ENCODE measurements at regions of chr7 and their contacts with region 1.

Region 1: GRCh38 chr7:128830231-128831177 is at the start of gene FLNC:
- DNase-seq: peak; percentile 61 to 71
- H3K4me3 ChIP-seq: peak within 1 kb of the TSS; percentile 74
- H3K4me3 Mint-ChIP-seq: peak within 1 kb of the TSS; percentile 75
- H3K27ac Mint-ChIP-seq: peak within 1 kb of the TSS; percentile 42
- H3K4me1 ChIP-seq: peaks cover 43% of the 10 kb centered on the region
- H3K4me1 Mint-ChIP-seq: peaks cover 33% of the 10 kb centered on the region
- H3K27me3 ChIP-seq: no peaks in the 10 kb centered on the region
- H3K27me3 Mint-ChIP-seq: no peaks in the 10 kb centered on the region
- CTCF ChIP-seq: no peak
- total RNA-seq, gene FLNC: 108 and 128 TPM in 2 replicates

Region 2: DNA sequence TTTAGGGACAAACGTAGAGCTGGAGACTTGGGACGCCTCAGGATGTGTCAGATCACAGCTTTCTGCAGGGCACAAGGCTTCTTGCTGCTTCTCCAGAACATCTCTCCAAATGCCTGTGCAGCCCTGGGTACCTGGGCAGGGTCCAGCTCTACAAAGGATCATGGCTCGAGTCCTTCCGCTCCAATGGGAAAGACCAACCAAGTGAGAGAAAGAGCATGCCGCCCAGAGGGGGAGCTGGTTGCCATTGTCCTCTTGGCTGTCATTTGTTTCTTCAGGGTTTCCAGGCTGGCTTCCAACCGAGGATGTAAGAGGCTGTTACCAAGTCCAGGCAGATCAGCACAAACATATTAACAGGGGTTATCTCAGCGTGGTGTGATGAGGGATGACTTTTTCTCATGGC is 595.0 kb before region 1 on chr7:
- CTCF ChIA-PET with region 1: no interaction called
- POLR2A ChIA-PET with region 1: no interaction called
- intact Hi-C with region 1: no loop called
- DNase-seq: no peak
- H3K4me3 ChIP-seq: no peak overlapping the region
- H3K4me3 Mint-ChIP-seq: no peak overlapping the region
- H3K27ac Mint-ChIP-seq: no peak overlapping the region
- H3K4me1 ChIP-seq: no peaks in the 10 kb centered on the region
- H3K4me1 Mint-ChIP-seq: no peaks in the 10 kb centered on the region
- H3K27me3 ChIP-seq: no peaks in the 10 kb centered on the region; the same call in 1 of the 2 replicates
- H3K27me3 Mint-ChIP-seq: peaks cover 12% of the 10 kb centered on the region
- CTCF ChIP-seq: no peak

Region 3: DNA sequence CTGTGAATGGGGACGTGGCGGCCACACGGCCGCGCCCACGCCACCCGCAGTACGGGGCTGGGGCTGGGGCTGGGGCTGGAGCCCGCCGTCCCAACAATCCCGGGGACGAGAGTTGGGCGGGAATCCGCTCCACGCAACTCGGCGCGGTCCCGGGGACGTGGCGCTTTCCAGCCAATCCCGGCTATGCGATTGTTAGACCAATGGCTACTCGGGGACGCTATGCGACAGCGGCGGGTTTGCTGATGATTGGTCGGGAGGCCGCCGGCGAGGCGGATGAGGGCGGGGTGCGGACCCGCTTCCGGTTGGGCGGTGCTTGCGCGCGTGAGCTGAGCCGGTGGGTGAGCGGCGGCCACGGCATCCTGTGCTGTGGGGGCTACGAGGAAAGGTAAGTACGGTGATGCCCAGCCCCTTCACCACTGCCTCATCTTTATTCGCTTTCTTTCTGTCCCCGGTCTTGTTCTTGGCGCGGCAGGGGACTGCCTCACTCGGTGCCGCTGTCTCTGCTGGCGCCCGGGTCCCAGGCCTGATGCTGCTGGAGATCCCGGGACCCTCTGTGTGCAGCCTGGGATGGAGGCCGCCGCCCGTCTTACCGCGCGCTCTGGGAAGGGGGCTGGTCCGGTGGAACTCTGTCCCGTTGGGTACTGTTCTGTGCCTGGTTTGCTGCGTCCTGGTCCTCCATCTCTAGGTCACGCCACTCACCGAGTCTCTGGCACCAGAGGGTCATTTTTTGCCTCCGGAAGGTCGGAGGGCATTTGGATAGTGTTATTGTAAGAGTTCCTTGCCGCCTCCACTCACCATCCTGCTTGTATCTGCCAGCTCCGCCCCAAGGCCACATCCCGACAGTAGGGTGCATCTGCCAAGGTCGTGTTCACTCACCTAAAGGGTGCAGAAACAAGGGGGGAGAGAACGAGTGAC is 91.2 kb before region 1 on chr7 and contains the start of gene CALU:
- CTCF ChIA-PET with region 1: interaction called, 5 read pairs
- POLR2A ChIA-PET with region 1: no interaction called
- intact Hi-C with region 1: loop called (anchors 2 kb)
- DNase-seq: peak; percentile 97 to 98
- H3K4me3 ChIP-seq: peak within 1 kb of the TSS; percentile 53
- H3K4me3 Mint-ChIP-seq: peak within 1 kb of the TSS; percentile 96
- H3K27ac Mint-ChIP-seq: peak within 1 kb of the TSS; percentile 95
- H3K4me1 ChIP-seq: peaks cover 40% of the 10 kb centered on the region
- H3K4me1 Mint-ChIP-seq: peaks cover 23% of the 10 kb centered on the region
- H3K27me3 ChIP-seq: no peaks in the 10 kb centered on the region
- H3K27me3 Mint-ChIP-seq: no peaks in the 10 kb centered on the region
- CTCF ChIP-seq: no peak
- total RNA-seq, gene CALU: 171 and 184 TPM in 2 replicates

Region 4: DNA sequence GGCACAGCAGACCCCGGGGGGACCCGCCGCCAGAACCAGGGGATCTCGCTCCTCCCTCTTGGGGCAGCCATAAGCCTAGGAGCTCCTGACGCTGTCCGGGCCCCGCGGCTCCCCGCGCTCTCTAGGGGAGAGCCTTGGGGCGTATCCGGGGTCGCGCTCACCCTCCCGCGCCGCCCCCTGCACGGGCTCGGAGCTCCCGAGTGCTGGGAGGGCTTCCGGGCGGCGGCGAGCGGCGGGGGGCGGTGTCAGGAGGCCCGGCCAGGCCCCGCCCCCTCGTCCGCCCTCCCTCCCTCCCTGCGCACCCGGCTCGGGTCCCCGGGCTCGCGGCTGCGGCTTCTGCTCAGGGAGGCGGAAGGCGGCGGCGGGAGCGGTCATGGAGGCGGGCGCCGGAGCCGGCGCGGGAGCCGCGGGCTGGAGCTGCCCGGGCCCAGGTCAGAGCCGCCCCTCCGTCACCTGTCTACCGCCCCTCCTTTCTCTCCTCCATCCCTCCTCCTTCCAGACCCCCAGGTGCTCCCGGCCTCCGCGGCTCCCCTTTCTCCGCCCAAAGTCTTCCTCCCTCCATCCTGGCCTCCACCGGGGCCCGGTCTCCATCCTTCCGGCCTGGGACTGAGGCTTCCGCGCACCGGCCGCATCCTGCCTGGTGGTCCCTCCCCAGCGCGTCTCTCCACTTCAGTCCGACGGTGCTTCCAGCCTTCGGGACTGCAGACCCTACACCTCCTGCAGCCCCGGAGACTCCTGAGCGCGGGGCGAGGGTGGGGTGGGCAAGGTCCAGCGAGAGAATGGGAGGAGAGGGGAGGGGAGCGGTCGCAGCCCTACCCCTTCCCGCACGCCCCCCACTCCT is 39.2 kb before region 1 on chr7:
- CTCF ChIA-PET with region 1: interaction called, 3 read pairs
- POLR2A ChIA-PET with region 1: interaction called, 5 read pairs
- intact Hi-C with region 1: loop called (anchors 5 kb)
- DNase-seq: peak; percentile 75 to 78
- H3K4me3 ChIP-seq: peak overlapping the region; percentile 82
- H3K4me3 Mint-ChIP-seq: peak overlapping the region; percentile 85
- H3K27ac Mint-ChIP-seq: no peak overlapping the region
- H3K4me1 ChIP-seq: no peaks in the 10 kb centered on the region
- H3K4me1 Mint-ChIP-seq: no peaks in the 10 kb centered on the region
- H3K27me3 ChIP-seq: peaks cover 1% of the 10 kb centered on the region
- H3K27me3 Mint-ChIP-seq: peaks cover 7% of the 10 kb centered on the region
- CTCF ChIP-seq: no peak

Region 5: DNA sequence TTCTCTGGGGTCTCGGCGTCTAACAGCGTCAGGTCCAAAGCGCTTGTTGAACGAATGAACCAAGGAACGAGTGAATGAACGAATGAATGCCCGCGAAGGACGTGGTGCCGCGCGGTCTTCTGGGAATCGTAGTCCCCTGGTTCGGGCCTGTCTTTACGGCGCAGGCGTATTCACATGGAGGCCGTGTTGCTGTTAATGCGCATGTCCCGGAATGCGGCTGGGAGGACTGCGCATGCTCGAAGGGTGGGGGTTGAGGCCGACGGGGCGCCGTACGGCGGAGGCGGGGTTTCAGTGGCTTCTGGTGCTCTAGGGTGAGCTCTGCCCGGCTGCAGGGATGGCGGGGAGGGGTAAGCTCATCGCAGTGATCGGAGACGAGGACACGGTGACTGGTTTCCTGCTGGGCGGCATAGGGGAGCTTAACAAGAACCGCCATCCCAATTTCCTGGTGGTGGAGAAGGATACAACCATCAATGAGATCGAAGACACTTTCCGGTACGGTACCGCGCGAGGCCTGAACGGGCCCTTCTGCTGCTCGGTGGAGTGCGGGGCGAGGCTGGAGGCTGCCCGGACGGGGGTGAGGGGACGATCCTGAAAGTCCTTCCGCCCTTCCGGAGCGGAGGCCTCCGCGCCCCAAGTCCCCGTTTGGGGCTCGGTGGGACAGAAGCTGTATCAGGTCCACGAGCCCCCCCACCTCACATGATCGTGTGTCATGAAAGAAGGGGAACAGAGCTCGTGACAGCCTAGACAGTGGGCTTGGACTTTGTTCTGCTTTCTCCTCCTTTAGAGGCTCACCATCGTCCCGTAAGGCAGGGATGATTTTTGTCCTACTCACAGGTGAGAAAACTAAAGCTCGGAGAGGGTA is 32.3 kb after region 1 on chr7 and contains the start of gene ATP6V1F:
- CTCF ChIA-PET with region 1: interaction called, 4 read pairs
- POLR2A ChIA-PET with region 1: no interaction called
- intact Hi-C with region 1: loop called (anchors 2 kb)
- DNase-seq: peak; percentile 98 to 99
- H3K4me3 ChIP-seq: peak within 1 kb of the TSS; percentile 93
- H3K4me3 Mint-ChIP-seq: peak within 1 kb of the TSS; percentile 84
- H3K27ac Mint-ChIP-seq: peak within 1 kb of the TSS; percentile 87
- H3K4me1 ChIP-seq: peaks cover 8% of the 10 kb centered on the region; the same call in 1 of the 2 replicates
- H3K4me1 Mint-ChIP-seq: peaks cover 12% of the 10 kb centered on the region
- H3K27me3 ChIP-seq: no peaks in the 10 kb centered on the region
- H3K27me3 Mint-ChIP-seq: no peaks in the 10 kb centered on the region
- CTCF ChIP-seq: no peak
- total RNA-seq, gene ATP6V1F: 162 and 168 TPM in 2 replicates

Region 6: DNA sequence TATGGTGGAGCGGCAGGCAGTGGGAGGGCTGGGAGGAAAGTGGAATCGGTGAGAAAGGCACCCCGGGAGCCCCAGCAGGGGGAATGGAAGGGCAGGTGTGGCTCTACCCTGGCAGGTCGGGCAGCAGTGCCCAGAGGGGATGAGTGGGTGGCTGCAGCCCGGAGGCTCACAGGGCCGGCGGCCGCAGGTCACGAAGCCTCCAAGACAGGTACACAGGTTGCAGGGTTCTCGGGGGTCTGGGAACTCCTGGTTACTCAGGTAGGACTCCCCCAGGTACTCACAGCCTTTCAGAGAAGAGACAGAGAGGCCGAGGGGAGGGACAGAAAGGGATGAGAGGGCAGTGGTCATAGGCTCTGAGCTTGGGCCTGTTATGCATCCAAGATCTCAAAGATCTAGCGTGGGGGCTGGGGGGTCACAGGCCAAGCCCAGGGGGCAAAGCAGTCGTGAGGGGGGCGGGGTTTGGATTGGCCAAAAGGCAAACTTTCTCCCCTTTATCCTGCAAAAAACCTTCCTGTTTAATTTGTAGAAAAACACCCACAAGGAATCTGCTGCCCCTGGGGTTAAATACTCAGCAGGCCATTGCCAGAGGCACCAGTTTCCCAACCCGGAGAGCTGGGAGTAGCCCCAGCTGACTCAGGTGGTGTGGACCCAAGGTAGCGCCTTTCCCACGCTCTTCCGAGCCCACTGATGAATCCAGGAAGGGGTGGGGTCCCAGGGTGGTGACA is 58.4 kb after region 1 on chr7:
- CTCF ChIA-PET with region 1: interaction called, 10 read pairs
- POLR2A ChIA-PET with region 1: no interaction called
- intact Hi-C with region 1: no loop called
- DNase-seq: no peak
- H3K4me3 ChIP-seq: no peak overlapping the region
- H3K4me3 Mint-ChIP-seq: no peak overlapping the region
- H3K27ac Mint-ChIP-seq: no peak overlapping the region
- H3K4me1 ChIP-seq: peaks cover 8% of the 10 kb centered on the region
- H3K4me1 Mint-ChIP-seq: no peaks in the 10 kb centered on the region
- H3K27me3 ChIP-seq: no peaks in the 10 kb centered on the region
- H3K27me3 Mint-ChIP-seq: no peaks in the 10 kb centered on the region
- CTCF ChIP-seq: no peak

Measured in Caco-2 (cell line).